AG04449 (cell line): ENCODE measurements at regions of chr6 and their contacts with region 1.

Region 1: GRCh38 chr6:26309731-26310142 is 55.3 kb upstream of the BTN3A2 start:
- DNase-seq: no peak
- H3K4me3 ChIP-seq: no peak overlapping the region
- CTCF ChIP-seq: no peak

Region 2: DNA sequence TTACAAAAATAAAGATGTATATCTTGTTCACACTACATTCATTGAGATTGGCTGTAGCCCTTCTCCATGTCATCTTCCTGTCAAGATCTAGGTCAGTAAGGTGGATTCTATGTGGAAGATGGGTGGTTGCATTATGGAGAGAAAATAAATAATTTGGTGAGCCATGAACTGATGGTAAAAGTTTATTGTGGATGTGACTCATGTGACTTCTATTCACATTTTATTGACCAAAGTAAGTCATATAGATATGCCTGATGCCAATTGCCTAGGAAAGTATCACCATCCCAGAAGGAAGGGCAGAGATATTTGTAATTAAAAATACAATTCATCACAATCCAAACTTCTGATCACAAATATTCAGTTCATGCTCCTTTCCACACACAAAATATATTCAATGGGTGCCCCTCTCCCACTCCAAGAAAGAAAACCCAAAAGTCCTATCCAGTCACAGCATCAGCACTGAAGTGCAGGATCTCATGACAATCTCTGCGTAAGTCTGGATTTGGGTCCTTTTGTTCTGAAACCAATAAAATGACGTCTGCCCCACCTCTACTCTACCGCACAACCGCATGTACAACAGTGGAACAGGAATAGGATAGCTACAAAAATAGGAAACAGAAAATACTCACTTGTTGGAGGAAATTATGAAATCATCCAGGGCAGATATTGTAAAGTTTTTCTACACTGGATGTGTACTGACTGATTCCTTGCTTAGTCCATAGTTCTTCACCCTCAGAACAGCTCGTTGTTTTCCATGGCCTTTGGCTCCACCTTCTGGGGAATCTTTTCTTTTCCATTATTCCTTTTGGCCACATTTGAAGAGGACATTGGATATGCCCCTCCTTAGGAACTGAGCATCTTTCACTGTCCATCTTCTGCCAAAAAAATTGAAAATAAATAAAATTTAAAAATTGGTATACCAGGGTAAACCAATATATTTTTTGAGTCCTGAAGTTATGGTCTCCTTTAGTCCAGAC is 419.6 kb before region 1 on chr6:
- CTCF ChIA-PET with region 1: no interaction called
- POLR2A ChIA-PET with region 1: no interaction called
- DNase-seq: no peak
- H3K4me3 ChIP-seq: no peak overlapping the region
- CTCF ChIP-seq: peak; percentile 12

Region 3: GRCh38 chr6:26322645-26323482 is 13.1 kb after region 1 on chr6:
- CTCF ChIA-PET with region 1: interaction called, 11 read pairs
- POLR2A ChIA-PET with region 1: interaction called, 5 read pairs
- DNase-seq: peak; percentile 88
- H3K4me3 ChIP-seq: peak overlapping the region; percentile 76
- CTCF ChIP-seq: no peak

Region 4: GRCh38 chr6:27016689-27017088 is 707.0 kb after region 1 on chr6:
- CTCF ChIA-PET with region 1: no interaction called
- POLR2A ChIA-PET with region 1: no interaction called
- DNase-seq: no peak
- H3K4me3 ChIP-seq: no peak overlapping the region
- CTCF ChIP-seq: no peak